Sciatic nerve (tissue), 2 donors: ENCODE measurements at regions of chrX and their contacts with region 1.

Region 1: DNA sequence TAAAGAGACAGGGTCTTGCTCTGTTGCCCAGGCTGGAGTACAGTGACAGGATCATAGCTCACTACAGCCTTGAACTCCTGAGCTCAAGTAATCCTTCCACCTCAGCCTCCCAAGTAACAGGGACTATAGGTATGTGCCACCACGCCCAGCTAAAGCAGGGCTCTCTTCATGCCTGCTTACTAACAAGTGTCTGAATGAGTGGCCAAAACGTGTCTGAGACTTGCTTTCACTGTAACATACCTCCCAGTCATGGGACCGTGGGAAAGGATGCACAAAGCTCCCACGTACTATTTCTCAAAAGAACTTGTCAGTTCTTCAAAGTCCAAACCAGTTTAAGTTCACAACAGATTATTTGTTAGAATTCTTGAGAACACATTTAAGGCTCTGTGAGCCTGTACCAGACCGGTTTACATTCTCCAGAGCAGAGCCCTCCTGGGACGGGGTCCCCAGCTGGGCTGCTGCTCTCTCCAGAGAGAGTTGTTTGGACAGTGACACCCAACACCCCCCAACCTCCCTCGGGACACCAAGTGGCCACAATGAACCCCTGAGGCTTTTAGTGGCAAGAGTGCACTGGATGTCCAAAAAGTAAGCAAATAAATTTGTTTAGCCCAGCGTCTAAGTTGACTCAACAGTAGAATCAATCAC is 24.1 kb downstream of the SH3KBP1 start:
- DNase-seq: no peak
- ATAC-seq: no peak

Region 2: DNA sequence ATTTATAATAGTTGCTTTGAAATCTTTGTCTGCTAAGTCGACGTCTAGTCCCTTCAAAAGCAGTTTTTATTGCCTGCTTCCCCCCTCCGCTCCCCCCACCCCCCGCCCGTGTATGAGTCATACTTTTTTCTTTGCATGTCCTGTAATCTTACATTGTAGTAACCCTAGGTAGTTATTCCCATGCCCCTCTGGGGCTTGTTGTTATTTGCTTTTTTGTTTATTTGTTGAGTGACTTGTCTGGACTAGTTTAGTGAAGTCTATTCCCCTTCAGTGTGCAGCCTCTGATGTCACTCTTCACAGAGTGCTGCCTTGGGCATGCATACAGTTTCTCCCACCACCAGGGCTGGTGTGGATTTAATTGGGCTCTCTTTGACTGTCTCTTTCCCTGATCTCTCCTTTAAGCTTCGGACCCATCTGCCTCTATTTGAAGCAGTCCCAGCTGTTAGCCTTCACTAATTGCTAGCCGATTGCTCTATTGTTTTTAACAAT is 1069.7 kb before region 1 on chrX:
- intact Hi-C with region 1: no loop called
- DNase-seq: no peak
- ATAC-seq: no peak

Region 3: DNA sequence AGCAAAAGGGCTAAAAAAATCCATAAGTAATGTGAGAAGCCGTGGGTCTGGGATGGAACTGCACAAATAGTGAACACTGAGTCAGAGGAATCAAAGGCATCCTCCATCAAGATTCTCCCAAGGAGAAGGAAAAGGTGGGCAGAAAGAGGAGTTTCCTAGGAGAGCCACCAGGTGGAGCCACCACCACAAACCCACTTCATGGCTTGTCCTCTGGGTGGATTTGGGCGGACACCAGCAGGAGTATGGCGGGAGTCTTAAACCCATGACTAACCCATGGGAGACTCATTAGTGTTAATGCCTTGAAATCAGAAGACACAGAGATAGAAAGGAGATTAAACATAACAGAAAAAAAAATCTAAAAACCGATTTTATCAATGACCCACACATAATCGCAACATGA is 123.7 kb before region 1 on chrX:
- intact Hi-C with region 1: loop called (anchors 10 kb)
- DNase-seq: peak; percentile 75
- ATAC-seq: peak; percentile 80

Region 4: DNA sequence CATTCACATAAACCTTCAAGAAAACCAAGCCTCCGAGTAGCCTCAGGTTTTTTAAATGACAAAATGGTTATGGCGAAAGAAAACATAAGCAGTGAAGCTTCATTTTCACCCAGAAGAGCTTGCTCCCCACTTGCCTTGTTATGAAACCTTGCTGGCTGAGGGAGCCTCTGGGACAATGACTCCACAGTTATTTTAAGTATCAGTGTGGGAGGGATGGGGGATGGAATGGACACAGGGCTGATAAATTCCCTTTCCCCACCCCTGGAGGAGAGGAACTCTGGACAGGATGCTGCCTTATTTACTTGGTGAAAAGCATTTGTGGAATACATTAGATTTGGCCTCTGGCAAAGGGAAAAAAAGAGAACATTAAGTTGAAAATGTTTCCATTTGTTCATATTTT is 1290.2 kb after region 1 on chrX:
- intact Hi-C with region 1: no loop called
- DNase-seq: no peak
- ATAC-seq: peak; percentile 95